ENCODE measurements at regions of chr1 and their contacts with region 1.

Region 1: DNA sequence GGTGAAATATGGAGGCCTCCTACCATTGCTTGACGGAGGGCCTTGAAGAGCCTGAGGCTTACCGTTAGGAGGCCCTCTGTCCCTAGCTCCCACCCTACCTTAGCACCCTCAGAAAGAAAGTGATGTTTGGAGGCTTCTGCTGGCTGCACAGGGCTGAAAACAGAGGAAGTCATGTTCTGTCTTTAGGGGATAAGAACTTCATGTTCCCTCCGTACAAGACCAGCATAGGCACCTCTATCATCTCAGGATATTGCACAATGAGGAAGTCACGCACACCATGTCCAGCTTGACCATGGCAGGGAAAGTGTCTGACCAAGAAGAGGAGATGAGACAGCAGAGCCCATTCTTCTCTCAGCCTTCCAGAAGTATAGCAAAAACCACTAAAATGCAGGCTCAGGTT is 13.8 kb downstream of the ADORA3 start:
- DNase-seq: no peak
- H3K4me3 ChIP-seq: no peak overlapping the region
- H3K27ac ChIP-seq: no peak overlapping the region
- H3K4me1 ChIP-seq: no peaks in the 10 kb centered on the region
- H3K27me3 ChIP-seq: no peaks in the 10 kb centered on the region
- CTCF ChIP-seq: no peak
- EP300 ChIP-seq: no peak
- POLR2A ChIP-seq: no peak

Region 2: GRCh38 chr1:111990878-111991718 is 501.5 kb after region 1 on chr1:
- intact Hi-C with region 1: loop called in 1 of 4 experiments (anchors 2 kb)
- DNase-seq: peak in 3 of 5 donors; percentile 38 to 65 (median 44)
- H3K4me3 ChIP-seq: peak overlapping the region; percentile 52
- H3K27ac ChIP-seq: no peak overlapping the region
- H3K4me1 ChIP-seq: peaks cover 11% of the 10 kb centered on the region
- H3K27me3 ChIP-seq: no peaks in the 10 kb centered on the region
- CTCF ChIP-seq: no peak
- EP300 ChIP-seq: no peak
- POLR2A ChIP-seq: no peak

Measured in ovary (tissue), 10 donors.